Ovary (tissue), 10 donors: ENCODE measurements at regions of chr3 and their contacts with region 1.

Region 1: DNA sequence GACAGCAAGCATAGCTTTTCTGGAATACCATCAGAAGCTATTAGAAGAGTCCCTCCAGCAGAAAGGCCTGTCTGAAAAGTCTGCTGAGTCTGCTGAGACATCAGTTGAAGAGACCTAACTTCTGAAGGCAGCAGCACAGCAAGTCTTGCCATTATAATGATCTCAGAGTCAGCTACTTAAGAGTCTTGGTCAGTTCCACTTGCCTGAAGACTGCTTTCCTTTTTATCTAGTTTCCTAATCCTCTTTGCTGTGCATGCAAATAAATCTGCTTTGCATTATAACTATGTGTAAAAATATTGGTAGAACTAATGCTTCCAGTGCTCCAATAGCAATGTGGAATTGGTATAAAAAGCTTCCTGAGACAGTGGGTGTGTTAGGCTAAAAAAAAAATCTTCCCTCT is 34.9 kb upstream of the CPOX start:
- DNase-seq: no peak
- H3K4me3 ChIP-seq: no peak overlapping the region
- H3K27ac ChIP-seq: no peak overlapping the region
- H3K4me1 ChIP-seq: no peaks in the 10 kb centered on the region
- H3K27me3 ChIP-seq: no peaks in the 10 kb centered on the region
- CTCF ChIP-seq: no peak
- EP300 ChIP-seq: no peak
- POLR2A ChIP-seq: no peak

Region 2: GRCh38 chr3:98460220-98460619 is 168.1 kb before region 1 on chr3:
- intact Hi-C with region 1: loop called in 1 of 4 experiments (anchors 10 kb)
- DNase-seq: no peak
- H3K4me3 ChIP-seq: no peak overlapping the region
- H3K27ac ChIP-seq: no peak overlapping the region
- H3K4me1 ChIP-seq: no peaks in the 10 kb centered on the region
- H3K27me3 ChIP-seq: no peaks in the 10 kb centered on the region
- CTCF ChIP-seq: no peak
- EP300 ChIP-seq: no peak
- POLR2A ChIP-seq: no peak

Region 3: DNA sequence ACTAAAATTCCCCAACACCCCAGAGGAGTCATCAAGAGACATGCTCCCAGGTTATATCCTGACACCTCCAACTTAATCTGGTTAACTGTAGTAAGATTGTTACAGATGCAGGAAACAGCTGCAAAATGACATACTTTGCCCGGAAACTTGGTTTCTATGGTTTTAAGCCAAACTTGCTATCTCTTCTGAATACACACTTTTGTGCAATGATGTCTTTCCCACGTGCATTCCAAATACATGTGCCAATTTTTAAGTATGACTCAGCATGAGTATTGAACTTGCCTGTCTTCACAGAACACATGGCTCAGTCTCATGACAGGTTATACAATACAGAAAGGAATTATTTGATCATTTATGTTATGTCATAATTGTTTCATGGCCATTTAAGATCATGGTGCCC is 480.2 kb after region 1 on chr3:
- intact Hi-C with region 1: loop called in 1 of 4 experiments (anchors 5 kb)
- DNase-seq: no peak
- H3K4me3 ChIP-seq: no peak overlapping the region
- H3K27ac ChIP-seq: no peak overlapping the region
- H3K4me1 ChIP-seq: no peaks in the 10 kb centered on the region
- H3K27me3 ChIP-seq: no peaks in the 10 kb centered on the region
- CTCF ChIP-seq: no peak
- EP300 ChIP-seq: no peak
- POLR2A ChIP-seq: no peak